H1 (cell line): ENCODE measurements at regions of chr4 and their contacts with region 1.

Region 1: GRCh38 chr4:189436207-189436606 is 504.5 kb upstream of the FRG1 start:
- DNase-seq: peak in 1 of 2 experiments; percentile 57
- H3K4me3 ChIP-seq: no peak overlapping the region
- H3K27ac ChIP-seq: no peak overlapping the region
- H3K4me1 ChIP-seq: no peaks in the 10 kb centered on the region
- H3K27me3 ChIP-seq: no peaks in the 10 kb centered on the region
- CTCF ChIP-seq: peak in 2 of 3 experiments; percentile 46 to 47; a peak in 3 of 4 replicates
- EP300 ChIP-seq: no peak
- POLR2A ChIP-seq: no peak
- RAD21 ChIP-seq: peak; percentile 54 to 62

Region 2: GRCh38 chr4:189792924-189793618 is 356.9 kb after region 1 on chr4:
- CTCF ChIA-PET with region 1: interaction called, 30 read pairs
- POLR2A ChIA-PET with region 1: no interaction called
- DNase-seq: peak; percentile 67 to 94
- H3K4me3 ChIP-seq: no peak overlapping the region; a peak in 2 of 8 replicates
- H3K27ac ChIP-seq: no peak overlapping the region
- H3K4me1 ChIP-seq: peaks cover 0 to 3% (median 0%) of the 10 kb centered on the region in 4 experiments; a peak in 3 of 7 replicates
- H3K27me3 ChIP-seq: no peaks in the 10 kb centered on the region
- CTCF ChIP-seq: peak; percentile 90 to 97 (median 97)
- EP300 ChIP-seq: no peak; a peak in 1 of 3 replicates
- POLR2A ChIP-seq: no peak
- RAD21 ChIP-seq: peak; percentile 99